ENCODE measurements at regions of chr3 and their contacts with region 1.

Region 1: GRCh38 chr3:69033470-69033869 is 18.7 kb downstream of the TMF1 start:
- DNase-seq: peak; percentile 73
- ATAC-seq: no peak
- H3K4me3 ChIP-seq: no peak overlapping the region
- H3K27ac ChIP-seq: no peak overlapping the region
- H3K4me1 ChIP-seq: no peaks in the 10 kb centered on the region
- H3K27me3 ChIP-seq: no peaks in the 10 kb centered on the region
- CTCF ChIP-seq: no peak
- POLR2A ChIP-seq: no peak
- RAD21 ChIP-seq: no peak

Region 2: GRCh38 chr3:68523330-68523729 is 510.1 kb before region 1 on chr3:
- CTCF ChIA-PET with region 1: no interaction called
- POLR2A ChIA-PET with region 1: no interaction called
- dilution Hi-C with region 1: no loop called
- in situ Hi-C with region 1: no loop called
- intact Hi-C with region 1: no loop called
- DNase-seq: no peak
- ATAC-seq: no peak
- H3K4me3 ChIP-seq: no peak overlapping the region
- H3K27ac ChIP-seq: no peak overlapping the region
- H3K4me1 ChIP-seq: no peaks in the 10 kb centered on the region
- H3K27me3 ChIP-seq: no peaks in the 10 kb centered on the region
- CTCF ChIP-seq: no peak
- POLR2A ChIP-seq: no peak
- RAD21 ChIP-seq: no peak

Region 3: DNA sequence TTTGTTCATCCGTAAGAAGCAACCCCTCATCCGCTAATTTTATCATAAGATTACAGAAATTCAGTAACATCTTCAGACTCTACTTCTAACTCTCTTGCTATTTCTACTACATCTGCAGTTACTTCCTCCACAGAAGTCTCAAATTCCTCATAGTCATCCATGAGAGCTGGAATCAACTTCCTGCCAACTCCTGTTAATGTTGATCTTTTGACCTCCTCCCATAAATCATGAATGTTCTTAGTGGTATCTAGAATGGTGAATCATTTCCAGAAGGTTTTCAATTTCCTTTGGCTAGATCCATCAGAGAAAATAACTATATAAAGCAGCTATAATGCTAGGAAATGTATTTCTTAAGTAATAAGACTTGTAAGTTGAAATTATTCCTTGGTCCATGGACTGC is 216.2 kb before region 1 on chr3:
- CTCF ChIA-PET with region 1: no interaction called
- POLR2A ChIA-PET with region 1: no interaction called
- dilution Hi-C with region 1: no loop called
- in situ Hi-C with region 1: no loop called
- intact Hi-C with region 1: no loop called
- DNase-seq: no peak
- ATAC-seq: no peak
- H3K4me3 ChIP-seq: no peak overlapping the region
- H3K27ac ChIP-seq: no peak overlapping the region
- H3K4me1 ChIP-seq: no peaks in the 10 kb centered on the region
- H3K27me3 ChIP-seq: no peaks in the 10 kb centered on the region
- CTCF ChIP-seq: no peak
- POLR2A ChIP-seq: no peak
- RAD21 ChIP-seq: no peak

Region 4: GRCh38 chr3:69020424-69020823 is 13.0 kb before region 1 on chr3:
- CTCF ChIA-PET with region 1: interaction called, 3 read pairs
- POLR2A ChIA-PET with region 1: no interaction called
- dilution Hi-C with region 1: no loop called
- in situ Hi-C with region 1: no loop called
- intact Hi-C with region 1: loop called (anchors 2 kb)
- DNase-seq: no peak
- ATAC-seq: no peak; the same call in 1 of the 2 replicates
- H3K4me3 ChIP-seq: no peak overlapping the region
- H3K27ac ChIP-seq: no peak overlapping the region
- H3K4me1 ChIP-seq: no peaks in the 10 kb centered on the region
- H3K27me3 ChIP-seq: no peaks in the 10 kb centered on the region
- CTCF ChIP-seq: peak; percentile 21; the same call in 1 of the 2 replicates
- POLR2A ChIP-seq: no peak
- RAD21 ChIP-seq: no peak

Region 5: GRCh38 chr3:69079269-69080159 is 46.0 kb after region 1 on chr3:
- CTCF ChIA-PET with region 1: no interaction called
- POLR2A ChIA-PET with region 1: no interaction called
- dilution Hi-C with region 1: no loop called
- in situ Hi-C with region 1: no loop called
- intact Hi-C with region 1: loop called (anchors 5 kb)
- DNase-seq: no peak
- ATAC-seq: peak; percentile 44
- H3K4me3 ChIP-seq: peak overlapping the region; percentile 100
- H3K27ac ChIP-seq: peak overlapping the region; percentile 55
- H3K4me1 ChIP-seq: peaks cover 9% of the 10 kb centered on the region
- H3K27me3 ChIP-seq: no peaks in the 10 kb centered on the region
- CTCF ChIP-seq: no peak
- POLR2A ChIP-seq: no peak
- RAD21 ChIP-seq: no peak